MCF 10A (cell line): ENCODE measurements at regions of chr1 and their contacts with region 1.

Region 1: DNA sequence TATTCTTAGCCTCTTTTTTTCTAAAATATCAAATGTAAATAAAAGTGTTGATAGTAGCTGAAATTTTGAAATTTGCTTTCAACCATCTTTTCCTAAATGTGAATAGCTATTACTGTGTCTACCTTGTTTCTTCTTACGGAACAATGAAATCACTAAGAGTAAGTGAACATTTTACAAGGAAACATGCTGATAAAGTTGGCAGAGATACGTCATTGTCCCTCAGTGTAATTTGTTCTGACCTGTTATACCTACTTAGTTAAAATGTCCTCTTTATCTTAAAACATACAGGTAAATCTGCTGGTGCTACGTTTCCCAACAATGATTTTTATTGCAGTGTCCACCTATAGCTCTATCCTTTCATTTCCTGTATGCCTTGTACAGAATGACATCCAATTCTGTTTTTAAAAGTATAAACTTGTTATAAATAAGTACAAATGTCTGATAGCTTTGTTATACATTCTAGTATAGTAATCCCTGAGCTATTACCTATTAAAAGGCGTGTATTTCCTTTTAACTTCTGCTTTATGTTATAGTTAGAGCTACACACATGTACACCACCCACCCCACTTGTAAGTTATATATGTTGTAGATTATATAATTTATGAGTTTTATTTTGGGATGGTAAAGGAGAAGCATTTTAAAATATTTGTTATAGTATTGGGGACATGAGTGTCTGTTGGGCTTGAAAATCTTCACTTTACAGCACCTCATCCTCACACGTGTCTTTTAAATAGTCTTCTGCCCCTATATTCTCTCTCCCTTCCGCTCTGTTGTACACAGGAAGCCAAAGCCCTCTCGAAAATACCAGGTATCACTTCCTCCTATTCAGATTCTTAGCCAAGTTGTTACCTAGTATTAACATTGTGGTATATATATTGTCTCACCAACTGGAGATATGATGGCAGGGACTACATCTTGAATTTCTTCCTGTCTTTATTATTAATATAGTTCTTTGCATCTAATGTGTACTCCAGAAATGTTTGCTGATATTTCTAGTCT is 25.2 kb downstream of the LAMC1 start:
- DNase-seq: no peak
- H3K4me3 Mint-ChIP-seq: no peak overlapping the region
- H3K27ac Mint-ChIP-seq: no peak overlapping the region
- H3K4me1 Mint-ChIP-seq: peaks cover 44% of the 10 kb centered on the region
- H3K27me3 Mint-ChIP-seq: no peaks in the 10 kb centered on the region
- CTCF ChIP-seq: no peak

Region 2: GRCh38 chr1:183030053-183030452 is 18.3 kb before region 1 on chr1:
- CTCF ChIA-PET with region 1: interaction called, 5 read pairs
- POLR2A ChIA-PET with region 1: interaction called, 30 read pairs
- intact Hi-C with region 1: no loop called
- DNase-seq: peak; percentile 88
- H3K4me3 Mint-ChIP-seq: peak overlapping the region; percentile 29
- H3K27ac Mint-ChIP-seq: peak overlapping the region; percentile 82
- H3K4me1 Mint-ChIP-seq: peaks cover 69% of the 10 kb centered on the region
- H3K27me3 Mint-ChIP-seq: no peaks in the 10 kb centered on the region
- CTCF ChIP-seq: no peak

Region 3: GRCh38 chr1:183058851-183059502 is 10.6 kb after region 1 on chr1:
- CTCF ChIA-PET with region 1: interaction called, 3 read pairs
- POLR2A ChIA-PET with region 1: interaction called, 34 read pairs
- intact Hi-C with region 1: no loop called
- DNase-seq: no peak
- H3K4me3 Mint-ChIP-seq: no peak overlapping the region
- H3K27ac Mint-ChIP-seq: no peak overlapping the region
- H3K4me1 Mint-ChIP-seq: peaks cover 15% of the 10 kb centered on the region
- H3K27me3 Mint-ChIP-seq: no peaks in the 10 kb centered on the region
- CTCF ChIP-seq: no peak